GM10248 (cell line): ENCODE measurements at regions of chr16 and their contacts with region 1.

Region 1: DNA sequence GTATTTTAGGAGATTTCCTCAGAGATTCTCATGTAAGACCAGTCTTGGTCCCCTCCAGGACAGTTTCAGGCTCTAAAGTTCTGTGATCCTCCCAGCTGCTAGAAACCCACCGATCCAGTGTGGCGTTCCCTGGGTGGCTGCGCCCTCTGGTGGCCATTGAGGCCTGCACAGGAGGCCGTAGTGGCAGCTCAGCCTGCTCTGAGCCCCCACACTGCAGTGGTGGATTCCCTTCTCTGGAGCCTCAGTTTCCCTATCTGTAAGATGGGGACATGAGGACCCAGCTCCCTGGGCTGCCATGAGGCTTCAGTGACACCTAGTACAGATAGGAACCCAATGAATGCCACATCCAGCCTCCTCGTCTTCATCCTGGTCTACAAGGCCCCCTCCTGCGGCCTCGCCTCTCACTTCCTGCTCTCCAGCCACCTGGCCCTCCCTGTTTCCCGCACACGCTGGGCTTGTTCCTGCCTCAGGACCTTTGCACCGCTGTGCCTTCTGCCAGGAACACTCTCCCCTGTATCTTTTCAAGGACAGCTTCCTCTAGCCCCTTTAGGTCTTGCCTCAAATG is 16.5 kb downstream of the CCDC102A start:
- DNase-seq: peak; percentile 89
- CTCF ChIP-seq: peak; percentile 98

Region 2: DNA sequence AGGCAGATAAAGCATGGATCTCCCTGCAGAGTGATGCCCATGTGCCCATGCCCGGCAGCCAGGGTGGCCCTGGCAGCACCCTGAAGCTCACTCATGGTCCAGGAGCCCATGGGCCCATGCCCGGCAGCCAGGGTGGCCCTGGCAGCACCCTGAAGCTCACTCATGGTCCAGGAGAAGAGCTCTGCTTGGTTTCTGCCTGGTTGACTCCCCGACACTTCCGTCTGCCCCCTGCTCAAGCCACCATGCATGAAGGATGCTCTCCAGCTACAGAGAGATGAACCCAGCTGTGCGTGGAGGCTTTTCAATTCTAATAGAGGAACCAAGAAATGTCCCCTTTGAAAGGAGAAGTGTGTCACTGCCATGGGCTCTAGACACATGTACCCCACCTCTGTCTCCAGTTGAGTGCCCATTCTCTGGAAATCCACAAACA is 106.6 kb before region 1 on chr16:
- CTCF ChIA-PET with region 1: interaction called, 85 read pairs
- POLR2A ChIA-PET with region 1: no interaction called
- DNase-seq: peak; percentile 82
- CTCF ChIP-seq: no peak

Region 3: GRCh38 chr16:57462209-57462977 is 57.5 kb before region 1 on chr16 and contains the start of gene POLR2C:
- CTCF ChIA-PET with region 1: interaction called, 17 read pairs
- POLR2A ChIA-PET with region 1: no interaction called
- DNase-seq: peak; percentile 94
- CTCF ChIP-seq: peak; percentile 98

Region 4: GRCh38 chr16:57485916-57486857 is 33.7 kb before region 1 on chr16 and contains the start of gene DOK4:
- CTCF ChIA-PET with region 1: interaction called, 20 read pairs
- POLR2A ChIA-PET with region 1: no interaction called
- DNase-seq: peak; percentile 95
- CTCF ChIP-seq: no peak

Region 5: GRCh38 chr16:57507136-57508034 is 12.5 kb before region 1 on chr16:
- CTCF ChIA-PET with region 1: interaction called, 48 read pairs
- POLR2A ChIA-PET with region 1: no interaction called
- DNase-seq: no peak
- CTCF ChIP-seq: no peak

Region 6: DNA sequence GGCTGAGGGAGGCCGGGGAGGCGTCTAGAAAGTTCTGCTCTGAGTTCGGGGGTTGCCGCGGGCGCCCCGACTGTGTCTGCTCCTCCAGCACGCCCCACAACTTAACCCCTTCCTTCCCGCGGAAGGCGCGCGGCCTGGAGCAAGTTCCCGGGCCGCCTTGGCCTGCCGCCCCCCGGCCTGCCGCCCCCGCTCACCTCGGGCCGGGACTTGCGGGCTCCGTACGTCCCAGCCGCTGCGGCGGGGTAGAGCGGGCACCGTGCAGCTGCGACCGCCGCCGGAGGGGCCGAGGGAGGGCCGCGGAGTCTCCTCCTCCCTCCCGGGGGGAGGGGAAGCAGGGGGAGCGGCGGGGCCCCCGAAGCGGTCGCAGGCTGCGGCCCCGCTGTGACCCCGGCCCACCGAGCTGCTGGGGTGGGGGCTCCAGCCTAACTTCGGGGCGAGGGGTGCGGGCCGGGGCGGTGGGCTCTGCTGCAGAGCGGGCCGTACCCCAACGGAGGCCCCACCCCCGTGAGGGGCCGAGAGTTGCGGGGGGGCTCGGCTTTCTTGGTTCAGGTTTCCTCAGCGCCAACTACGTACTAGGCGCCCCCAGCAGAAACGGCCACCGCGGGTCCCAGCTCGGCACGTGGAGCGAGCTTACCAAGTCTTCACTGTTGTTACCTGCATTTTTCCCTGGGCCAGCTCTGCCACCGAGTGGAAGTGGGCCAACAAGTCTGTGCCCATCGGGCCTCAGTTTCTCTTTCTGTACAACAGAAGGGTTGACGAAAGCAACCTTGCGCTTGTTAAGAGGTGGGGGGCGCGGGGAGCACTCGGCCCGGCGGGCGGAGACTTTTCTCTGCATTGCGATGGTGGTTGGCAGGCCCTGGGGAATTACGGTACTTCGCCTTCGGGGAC is 16.7 kb after region 1 on chr16 and contains the start of gene CCDC102A:
- CTCF ChIA-PET with region 1: interaction called, 19 read pairs
- POLR2A ChIA-PET with region 1: no interaction called
- DNase-seq: peak; percentile 29
- CTCF ChIP-seq: no peak

Region 7: DNA sequence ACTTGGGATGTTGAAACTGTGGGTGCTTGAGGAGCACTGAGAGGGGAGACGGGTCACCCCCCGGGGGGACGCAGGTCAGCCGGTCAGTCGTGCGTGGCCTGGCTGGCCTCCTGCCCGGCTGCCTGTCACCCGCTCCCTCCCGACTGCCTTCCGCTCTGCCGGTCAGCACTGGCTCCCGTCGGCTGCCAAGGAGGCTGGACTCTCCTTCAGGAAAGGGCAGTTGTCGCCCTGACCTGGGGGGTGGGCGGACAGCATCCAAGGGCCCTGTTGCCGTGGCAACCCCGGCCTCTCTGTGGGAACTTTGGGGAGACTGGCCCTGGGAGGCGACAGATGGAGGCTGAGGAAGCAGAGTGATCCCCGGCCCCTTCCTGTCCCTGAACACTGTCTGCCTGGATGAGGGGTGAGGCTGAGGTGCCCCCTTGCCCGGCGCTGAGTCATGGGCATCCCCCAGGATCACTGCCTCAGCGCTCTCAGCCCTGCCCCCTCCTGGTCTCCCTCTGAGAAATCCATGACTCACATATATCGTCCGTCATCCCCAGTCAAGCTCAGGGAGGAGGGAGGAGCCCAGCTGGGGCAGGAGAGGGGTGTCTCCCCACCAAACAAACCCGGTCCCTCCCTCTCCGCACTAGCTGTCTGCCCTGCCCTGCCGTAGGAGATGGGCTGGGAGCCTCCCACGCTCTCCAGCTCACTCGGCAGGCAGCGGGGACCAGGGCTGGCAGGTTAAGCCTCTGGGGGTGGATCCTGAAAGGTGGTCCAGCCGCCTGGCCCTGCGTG is 108.3 kb after region 1 on chr16 and contains the start of gene ADGRG1:
- CTCF ChIA-PET with region 1: no interaction called
- POLR2A ChIA-PET with region 1: no interaction called
- DNase-seq: peak; percentile 47
- CTCF ChIP-seq: no peak

Region 8: GRCh38 chr16:57648590-57649442 is 128.9 kb after region 1 on chr16:
- CTCF ChIA-PET with region 1: interaction called, 11 read pairs
- POLR2A ChIA-PET with region 1: no interaction called
- DNase-seq: peak; percentile 92
- CTCF ChIP-seq: peak; percentile 100